Ascending aorta (tissue), 2 donors: ENCODE measurements at regions of chr3 and their contacts with region 1.

Region 1: GRCh38 chr3:197224034-197224444 is 74.4 kb downstream of the DLG1 start:
- DNase-seq: no peak
- H3K4me3 ChIP-seq: no peak overlapping the region
- H3K27ac ChIP-seq: no peak overlapping the region
- H3K4me1 ChIP-seq: peaks cover 0 to 3% of the 10 kb centered on the region in 2 donors
- H3K27me3 ChIP-seq: no peaks in the 10 kb centered on the region
- CTCF ChIP-seq: peak in 2 of 3 experiments; percentile 22 to 56

Region 2: GRCh38 chr3:197516517-197516889 is 292.5 kb after region 1 on chr3:
- intact Hi-C with region 1: loop called (anchors 10 kb)
- DNase-seq: no peak
- H3K4me3 ChIP-seq: no peak overlapping the region
- H3K27ac ChIP-seq: no peak overlapping the region
- H3K4me1 ChIP-seq: no peaks in the 10 kb centered on the region
- H3K27me3 ChIP-seq: no peaks in the 10 kb centered on the region
- CTCF ChIP-seq: no peak